ENCODE measurements at regions of chr11 and their contacts with region 1.

Region 1: DNA sequence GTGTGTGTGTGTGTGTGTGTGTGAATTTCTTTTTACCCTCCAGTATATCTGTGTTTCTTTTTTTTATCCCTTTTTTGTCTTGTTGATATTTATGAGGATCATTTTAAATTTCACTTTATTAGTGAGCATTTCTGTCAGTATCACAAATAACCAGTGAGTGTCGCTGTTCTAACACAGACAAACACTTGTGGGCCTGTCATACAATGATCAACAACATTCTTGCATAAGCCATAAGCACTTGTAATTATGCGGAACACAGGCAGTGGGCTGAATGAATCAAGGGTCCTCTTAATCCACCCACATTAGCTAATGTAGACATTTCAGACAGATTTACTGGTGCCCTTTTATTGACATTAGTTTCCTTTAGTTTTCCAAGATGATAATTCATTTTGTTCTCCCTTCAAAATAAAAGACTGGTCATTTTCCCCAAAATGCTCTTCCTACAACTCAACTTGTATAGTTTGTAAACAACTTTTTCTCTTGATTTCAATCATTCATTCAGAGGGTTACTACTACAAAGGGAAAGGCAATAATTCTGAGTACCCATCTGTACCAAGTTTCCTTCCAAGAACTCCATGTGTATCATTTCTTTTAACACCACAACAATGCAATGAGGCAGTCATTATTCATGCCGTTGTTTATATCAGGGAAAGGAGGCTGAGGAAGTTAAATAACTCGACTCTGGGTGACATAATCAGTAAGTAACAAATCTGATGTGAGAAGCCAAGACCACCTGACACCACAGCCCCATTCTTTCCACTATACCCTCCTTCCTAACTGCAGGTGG is 34.5 kb upstream of the ANO3 start:
- DNase-seq: no peak
- H3K4me3 Mint-ChIP-seq: no peak overlapping the region
- H3K27ac Mint-ChIP-seq: no peak overlapping the region
- H3K4me1 Mint-ChIP-seq: no peaks in the 10 kb centered on the region
- H3K27me3 Mint-ChIP-seq: no peaks in the 10 kb centered on the region

Region 2: GRCh38 chr11:26187639-26188038 is 109.7 kb before region 1 on chr11:
- CTCF ChIA-PET with region 1: no interaction called
- intact Hi-C with region 1: no loop called
- DNase-seq: no peak
- H3K4me3 Mint-ChIP-seq: no peak overlapping the region
- H3K27ac Mint-ChIP-seq: no peak overlapping the region
- H3K4me1 Mint-ChIP-seq: no peaks in the 10 kb centered on the region
- H3K27me3 Mint-ChIP-seq: no peaks in the 10 kb centered on the region

Region 3: DNA sequence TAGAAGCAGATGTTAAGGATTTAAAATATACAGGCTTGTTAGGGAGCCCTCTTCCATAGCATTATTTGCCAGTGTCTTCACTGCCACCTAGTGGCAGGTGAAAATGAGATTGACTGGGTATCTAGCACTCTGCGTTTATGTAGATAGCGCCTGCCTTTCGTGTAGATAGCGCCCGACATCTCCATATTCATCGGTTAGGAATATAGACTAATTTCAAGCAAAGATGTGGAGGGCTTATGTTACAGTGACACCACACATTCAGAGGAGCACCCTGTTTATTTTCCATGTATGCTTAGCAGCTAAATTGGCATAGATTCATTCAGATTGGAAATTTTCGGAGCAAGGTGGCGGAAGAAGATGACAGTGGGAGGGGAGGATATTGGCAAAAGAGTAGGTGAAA is 352.5 kb after region 1 on chr11:
- CTCF ChIA-PET with region 1: no interaction called
- intact Hi-C with region 1: loop called (anchors 2 kb)
- DNase-seq: peak; percentile 45
- H3K4me3 Mint-ChIP-seq: no peak overlapping the region
- H3K27ac Mint-ChIP-seq: no peak overlapping the region
- H3K4me1 Mint-ChIP-seq: no peaks in the 10 kb centered on the region
- H3K27me3 Mint-ChIP-seq: no peaks in the 10 kb centered on the region

Region 4: DNA sequence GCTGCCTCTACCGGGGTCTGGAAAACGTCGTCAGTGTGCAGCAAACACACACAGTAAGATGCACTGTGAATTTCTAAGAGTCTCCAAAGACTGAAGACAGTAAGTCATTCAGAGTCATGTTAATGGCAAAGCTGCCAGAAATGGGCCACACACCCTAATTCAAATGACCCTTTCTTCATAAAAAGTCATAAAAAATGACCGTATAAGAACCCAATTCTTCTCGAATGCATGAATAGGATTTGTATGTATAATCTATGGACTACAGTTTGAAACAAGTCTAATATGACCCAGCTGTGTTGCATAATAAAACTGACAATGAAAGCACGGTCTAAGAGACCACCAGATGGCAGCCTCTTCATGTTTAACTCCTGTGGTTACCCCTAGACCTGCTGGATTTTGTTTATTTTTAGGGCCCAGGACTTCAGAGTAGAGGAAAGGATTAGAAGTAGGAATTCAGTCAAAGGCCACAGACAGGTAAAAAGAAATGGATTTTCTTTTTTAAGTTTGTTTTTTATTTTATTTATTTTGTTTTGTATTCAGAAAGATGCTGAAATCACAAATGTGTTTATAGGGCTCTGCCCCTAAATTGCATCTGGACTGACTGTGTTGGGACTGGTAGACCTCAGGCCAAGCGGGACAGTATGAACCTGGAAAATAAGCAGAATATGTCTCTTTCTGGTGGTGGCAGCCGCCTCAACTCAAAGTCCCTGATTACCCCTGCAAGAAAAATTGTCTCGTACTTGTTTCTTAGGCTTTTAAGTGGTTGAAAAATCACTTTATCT is 456.5 kb after region 1 on chr11:
- CTCF ChIA-PET with region 1: no interaction called
- intact Hi-C with region 1: loop called (anchors 10 kb)
- DNase-seq: peak; percentile 17
- H3K4me3 Mint-ChIP-seq: no peak overlapping the region
- H3K27ac Mint-ChIP-seq: no peak overlapping the region
- H3K4me1 Mint-ChIP-seq: no peaks in the 10 kb centered on the region
- H3K27me3 Mint-ChIP-seq: no peaks in the 10 kb centered on the region

Measured in activated naive CD4-positive, alpha-beta T cell treated with anti-CD3 and anti-CD28 coated beads for 36 hours (primary cell).